ENCODE measurements at regions of chr16 and their contacts with region 1.

Region 1: DNA sequence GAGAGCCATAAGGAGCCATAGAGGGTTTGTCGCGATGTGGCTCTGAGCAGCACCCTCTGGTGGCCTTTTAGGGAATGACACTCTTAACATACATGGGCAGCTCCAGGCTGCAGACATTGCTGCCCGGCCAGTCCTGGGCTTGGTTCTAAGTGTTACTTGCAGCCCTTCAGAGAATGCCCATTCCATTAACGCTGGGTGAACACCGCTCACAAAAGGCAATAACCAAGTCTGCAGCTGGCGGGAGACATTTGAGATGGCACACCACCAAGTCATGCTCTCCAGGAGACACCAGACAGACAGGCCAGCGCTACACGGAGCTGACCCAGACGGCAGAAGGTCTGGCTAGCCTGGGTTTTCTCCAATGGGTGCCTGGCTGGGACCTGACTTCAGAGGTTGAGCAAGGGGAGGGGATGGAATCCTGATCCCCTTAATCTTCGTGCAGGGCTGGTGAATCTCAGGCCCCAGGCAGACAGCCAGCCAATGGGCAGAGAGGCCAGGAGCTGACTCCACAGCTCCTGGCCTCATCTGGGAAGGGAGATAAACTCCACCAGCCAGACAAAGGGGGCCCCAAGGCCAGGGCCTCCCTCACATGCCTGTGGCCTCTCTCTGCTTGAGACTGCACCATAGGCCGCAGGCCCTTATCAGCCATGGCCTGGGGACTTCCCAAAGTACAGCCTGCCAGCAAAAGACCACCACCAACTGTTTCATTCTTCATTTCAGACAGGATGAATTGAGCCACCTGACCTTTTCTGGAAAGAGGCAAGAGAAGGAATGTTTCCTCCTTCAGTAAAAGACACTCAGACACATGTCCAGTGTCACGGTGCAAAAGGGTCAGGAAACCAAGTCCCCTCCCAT is 58.8 kb downstream of the ZDHHC7 start:
- DNase-seq: peak; percentile 77 to 87 (median 81)
- H3K4me3 ChIP-seq: peak overlapping the region in 2 of 7 experiments; percentile 1 to 45
- H3K27ac ChIP-seq: peak overlapping the region in 1 of 2 experiments; percentile 27
- H3K4me1 ChIP-seq: peaks cover 11 to 41% (median 34%) of the 10 kb centered on the region in 4 experiments
- H3K27me3 ChIP-seq: peaks cover 0 to 20% (median 0%) of the 10 kb centered on the region in 5 experiments

Region 2: DNA sequence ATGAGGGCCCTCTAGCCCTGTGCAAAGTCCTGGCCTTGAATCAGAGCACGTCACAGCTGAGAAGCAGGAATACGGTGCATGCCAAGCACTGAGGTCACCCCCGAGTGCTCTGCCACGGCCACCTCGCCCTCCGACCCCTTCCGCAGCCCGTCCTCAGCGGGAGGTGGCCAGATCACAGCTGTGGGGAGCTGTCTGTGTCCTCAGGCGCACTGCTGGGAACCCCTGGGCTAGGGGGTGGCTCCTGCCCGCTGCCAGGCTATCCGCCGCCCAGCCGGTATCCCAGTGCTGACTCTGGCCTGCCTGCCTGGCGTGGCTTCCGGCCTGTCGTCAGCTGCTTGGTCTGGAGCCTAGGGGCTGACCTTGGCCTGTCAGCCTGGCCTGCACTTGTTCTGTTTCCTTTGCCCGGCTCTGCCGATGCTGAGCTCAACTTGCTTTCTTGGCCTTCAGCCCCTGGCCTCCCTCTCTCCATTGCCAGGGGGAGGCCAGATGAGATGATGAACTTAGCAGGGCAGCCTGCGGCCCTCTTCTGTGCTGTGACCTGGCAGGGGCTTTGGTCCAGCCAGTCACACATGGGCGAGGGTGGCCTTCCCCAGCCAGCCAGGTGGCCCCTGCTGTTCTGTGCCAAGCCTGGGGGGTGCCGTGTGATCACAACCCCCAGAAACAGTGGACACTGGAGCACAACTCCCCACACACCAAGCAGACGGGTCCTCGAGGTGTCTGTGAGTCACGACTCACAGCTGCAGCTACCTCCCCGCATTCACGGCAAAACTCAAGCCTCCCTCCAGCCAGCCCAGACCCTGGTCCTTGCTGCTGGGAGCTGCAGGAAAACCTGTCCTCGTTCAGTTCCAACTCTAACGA is 18.6 kb before region 1 on chr16:
- CTCF ChIA-PET with region 1: interaction called, 121 read pairs
- POLR2A ChIA-PET with region 1: no interaction called
- DNase-seq: no peak
- H3K4me3 ChIP-seq: no peak overlapping the region
- H3K27ac ChIP-seq: no peak overlapping the region
- H3K4me1 ChIP-seq: no peaks in the 10 kb centered on the region
- H3K27me3 ChIP-seq: peaks cover 0 to 31% (median 0%) of the 10 kb centered on the region in 5 experiments

Region 3: GRCh38 chr16:84964386-84965128 is 12.0 kb after region 1 on chr16:
- CTCF ChIA-PET with region 1: interaction called, 68 read pairs
- POLR2A ChIA-PET with region 1: no interaction called
- DNase-seq: no peak
- H3K4me3 ChIP-seq: no peak overlapping the region
- H3K27ac ChIP-seq: no peak overlapping the region
- H3K4me1 ChIP-seq: peaks cover 0 to 11% (median 2%) of the 10 kb centered on the region in 4 experiments
- H3K27me3 ChIP-seq: peaks cover 0 to 14% (median 2%) of the 10 kb centered on the region in 5 experiments

Measured in common myeloid progenitor, CD34-positive (primary cell).